ENCODE measurements at regions of chr1 and their contacts with region 1.

Region 1: GRCh38 chr1:201895913-201896807 is 7.5 kb downstream of the SHISA4 start:
- DNase-seq: peak; percentile 90
- CTCF ChIP-seq: peak; percentile 93

Region 2: DNA sequence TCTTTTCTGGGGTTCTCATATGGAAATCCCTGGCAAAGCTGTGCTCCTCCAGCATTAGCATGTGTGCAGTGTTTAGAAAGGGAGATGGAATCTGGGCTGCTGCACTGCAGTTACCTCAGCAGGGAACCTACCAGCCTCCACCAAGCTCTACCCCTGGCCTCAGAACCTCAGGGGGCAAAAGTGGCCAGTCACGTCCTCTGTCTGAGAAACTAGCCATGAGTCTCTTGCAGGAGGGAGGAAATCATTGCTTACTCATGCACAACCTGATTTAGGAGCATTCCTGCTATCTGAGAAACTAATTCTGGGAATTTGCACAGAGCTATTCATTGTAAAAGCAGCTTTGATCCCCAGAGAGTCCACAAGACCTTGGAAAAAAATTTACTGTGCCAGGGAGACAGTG is 147.8 kb before region 1 on chr1:
- CTCF ChIA-PET with region 1: no interaction called
- POLR2A ChIA-PET with region 1: no interaction called
- DNase-seq: no peak
- CTCF ChIP-seq: no peak

Region 3: DNA sequence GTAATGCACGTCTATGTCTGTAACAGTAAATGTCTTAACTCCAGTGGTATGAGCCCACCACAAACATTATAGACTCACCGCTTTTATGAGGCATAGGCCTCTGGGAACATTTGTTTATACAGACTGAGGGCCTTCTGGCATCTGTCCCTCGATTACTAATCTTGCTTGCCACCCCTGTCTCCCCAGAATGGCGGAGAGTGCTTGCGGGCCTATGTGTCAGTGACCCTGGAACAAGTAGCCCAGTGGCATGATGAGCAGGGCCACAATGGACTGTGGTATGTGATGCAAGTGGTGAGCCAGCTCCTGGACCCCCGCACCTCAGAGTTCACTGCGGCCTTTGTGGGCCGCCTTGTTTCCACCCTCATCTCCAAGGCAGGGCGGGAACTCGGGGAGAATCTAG is 25.8 kb before region 1 on chr1:
- CTCF ChIA-PET with region 1: interaction called, 10 read pairs
- POLR2A ChIA-PET with region 1: no interaction called
- DNase-seq: no peak
- CTCF ChIP-seq: no peak

Region 4: DNA sequence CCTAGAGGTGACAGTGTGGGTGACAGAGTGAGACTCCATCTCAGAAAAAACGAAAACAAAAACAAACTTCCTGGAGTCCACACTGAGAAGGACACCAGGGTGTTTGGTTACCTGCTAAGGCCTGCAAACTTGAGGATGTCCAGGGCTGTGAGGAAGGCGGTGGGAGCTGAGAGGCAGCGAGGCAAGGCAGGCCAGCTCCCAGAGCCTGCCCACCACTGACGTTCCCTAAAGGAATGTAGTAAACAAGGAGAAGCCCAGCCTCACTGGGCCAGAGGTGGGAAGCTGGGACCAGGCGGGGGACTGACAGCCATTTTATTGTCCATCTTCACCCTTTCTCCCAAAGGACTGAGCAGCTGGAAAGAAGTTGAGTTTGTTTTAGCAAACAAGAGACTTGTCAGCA is 16.7 kb after region 1 on chr1:
- CTCF ChIA-PET with region 1: interaction called, 65 read pairs
- POLR2A ChIA-PET with region 1: no interaction called
- DNase-seq: no peak
- CTCF ChIP-seq: no peak

Region 5: DNA sequence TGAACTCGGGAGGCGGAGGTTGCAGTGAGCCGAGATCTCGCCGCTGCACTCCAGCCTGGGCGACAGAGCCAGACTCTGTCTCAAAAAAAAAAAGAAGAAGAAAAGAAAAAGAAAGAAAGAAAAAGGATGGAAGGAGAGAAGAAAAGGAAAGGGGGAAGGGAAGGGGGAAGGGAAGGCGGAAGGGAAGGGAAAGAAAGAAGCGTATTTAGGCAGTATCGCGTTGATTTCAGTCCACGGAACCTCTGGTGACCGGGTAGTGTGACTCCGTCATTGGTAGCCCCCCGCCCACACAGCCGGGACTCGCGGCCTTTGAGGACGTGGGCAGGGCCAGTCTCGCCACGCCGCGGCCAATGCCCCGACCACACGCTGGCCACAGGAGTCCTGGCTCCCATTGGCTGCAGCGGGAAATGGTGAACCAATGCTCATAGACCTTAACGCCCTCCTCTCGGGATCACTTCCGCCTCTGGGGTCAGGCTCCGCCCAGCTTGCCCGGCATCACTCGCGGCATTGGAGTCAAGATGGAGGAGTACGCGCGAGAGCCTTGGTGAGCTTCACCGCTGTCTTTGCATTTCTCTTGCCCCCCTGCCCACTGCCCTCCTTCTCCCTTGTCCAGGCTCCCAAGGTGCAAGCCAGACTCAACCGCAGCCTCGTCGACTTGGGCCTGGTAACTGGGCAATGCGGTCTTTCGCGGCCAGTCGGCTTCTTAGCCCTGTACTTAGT is 59.0 kb after region 1 on chr1 and contains the start of gene TIMM17A:
- CTCF ChIA-PET with region 1: interaction called, 20 read pairs
- POLR2A ChIA-PET with region 1: no interaction called
- DNase-seq: peak; percentile 97
- CTCF ChIP-seq: no peak

Region 6: GRCh38 chr1:201970334-201971159 is 74.4 kb after region 1 on chr1:
- CTCF ChIA-PET with region 1: interaction called, 163 read pairs
- POLR2A ChIA-PET with region 1: no interaction called
- DNase-seq: no peak
- CTCF ChIP-seq: no peak

Region 7: GRCh38 chr1:201999625-202000238 is 103.6 kb after region 1 on chr1:
- CTCF ChIA-PET with region 1: interaction called, 32 read pairs
- POLR2A ChIA-PET with region 1: no interaction called
- DNase-seq: peak; percentile 67
- CTCF ChIP-seq: peak; percentile 65

Region 8: DNA sequence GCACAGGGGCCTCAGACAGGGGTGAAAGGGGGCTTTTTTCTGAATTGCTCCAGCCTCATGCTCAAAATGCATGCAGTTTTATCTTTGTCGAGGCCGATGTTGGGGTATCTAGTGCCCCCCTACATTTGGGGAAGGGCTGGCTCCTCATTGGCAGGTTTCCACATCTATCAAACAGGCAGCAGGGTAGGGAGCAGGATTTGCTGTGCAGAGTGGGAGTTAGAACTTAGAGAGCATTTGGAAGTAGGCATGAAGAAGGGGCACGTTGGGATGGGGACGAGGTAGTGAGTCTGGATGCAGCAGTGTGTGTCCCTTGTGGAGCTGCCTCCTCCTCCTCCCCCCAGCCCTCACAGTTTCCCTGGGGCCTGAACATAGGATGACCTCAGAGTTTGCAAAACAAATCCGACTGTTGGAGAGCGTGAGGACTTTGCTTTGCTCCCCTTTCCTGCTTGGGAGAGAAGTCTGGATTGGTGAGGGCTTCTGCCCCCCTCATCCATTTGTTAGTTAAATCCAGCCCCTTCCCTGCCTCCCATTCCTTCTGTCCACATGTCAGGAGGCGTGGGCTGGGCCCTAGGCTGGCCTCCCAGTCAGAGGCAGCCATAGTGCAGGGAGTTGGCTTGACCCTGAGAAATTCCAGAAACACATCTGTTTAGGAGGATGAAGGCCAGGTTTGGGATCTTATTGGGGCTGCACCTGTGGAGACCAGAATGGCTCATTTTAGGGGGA is 189.7 kb after region 1 on chr1:
- CTCF ChIA-PET with region 1: no interaction called
- POLR2A ChIA-PET with region 1: no interaction called
- DNase-seq: no peak
- CTCF ChIP-seq: no peak

Region 9: DNA sequence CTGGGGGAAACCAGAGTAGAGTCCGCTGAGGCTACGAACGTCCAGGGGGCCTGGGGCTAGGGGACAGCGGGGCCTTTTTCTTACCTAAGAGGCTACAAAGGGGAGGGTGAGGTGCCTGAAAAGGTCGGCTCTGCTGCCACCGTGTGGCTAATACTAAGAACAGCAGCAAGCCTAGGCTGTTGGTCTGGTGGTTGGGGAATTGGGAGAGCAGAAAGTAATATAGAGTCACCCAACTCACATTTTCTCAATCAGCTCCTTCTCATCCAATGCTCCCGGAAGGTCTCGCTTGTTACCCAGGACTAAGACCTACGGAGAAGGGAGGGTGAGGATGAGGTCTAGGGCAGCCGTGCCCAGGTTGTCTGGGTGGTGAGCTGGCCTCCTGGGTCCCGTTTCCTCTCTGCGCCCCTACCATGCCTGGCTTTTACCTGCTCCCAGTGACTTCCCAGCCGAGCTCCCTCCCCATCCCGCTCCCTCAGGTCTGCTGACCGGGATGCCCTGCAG is 239.1 kb after region 1 on chr1:
- CTCF ChIA-PET with region 1: interaction called, 17 read pairs
- POLR2A ChIA-PET with region 1: no interaction called
- DNase-seq: peak; percentile 89
- CTCF ChIP-seq: peak; percentile 90

Measured in GM10248 (cell line).